Esophagus squamous epithelium (tissue), 5 donors: ENCODE measurements at regions of chr7 and their contacts with region 1.

Region 1: GRCh38 chr7:129163875-129164544 is 19.5 kb downstream of the TSPAN33 start:
- DNase-seq: no peak
- H3K4me3 ChIP-seq: no peak overlapping the region
- H3K27ac ChIP-seq: no peak overlapping the region
- H3K4me1 ChIP-seq: peaks cover 0 to 8% (median 3%) of the 10 kb centered on the region in 3 donors
- H3K27me3 ChIP-seq: peaks cover 0 to 13% (median 0%) of the 10 kb centered on the region in 4 donors
- CTCF ChIP-seq: peak; percentile 62 to 89 (median 76)
- POLR2A ChIP-seq: no peak

Region 2: DNA sequence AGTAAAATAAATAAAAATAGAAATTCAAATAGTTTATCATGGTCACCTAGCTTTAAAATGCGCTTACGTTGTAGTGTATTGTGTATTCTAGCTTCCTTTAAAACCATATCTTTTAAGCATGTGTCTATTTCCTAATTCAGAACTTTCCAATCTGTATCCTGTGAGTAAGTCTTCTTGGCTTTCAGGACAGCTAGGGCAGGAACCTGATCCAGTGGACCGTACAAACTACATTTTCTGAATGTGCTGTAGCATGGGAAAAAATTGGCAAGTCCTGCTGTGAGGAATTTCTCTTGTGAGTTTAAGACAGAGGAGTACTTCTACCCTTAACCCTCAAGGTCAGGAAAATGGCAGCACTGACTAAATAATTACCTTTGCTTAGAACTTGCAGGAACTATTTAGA is 400.5 kb before region 1 on chr7:
- intact Hi-C with region 1: no loop called
- DNase-seq: no peak
- H3K4me3 ChIP-seq: no peak overlapping the region
- H3K27ac ChIP-seq: no peak overlapping the region
- H3K4me1 ChIP-seq: no peaks in the 10 kb centered on the region
- H3K27me3 ChIP-seq: no peaks in the 10 kb centered on the region
- CTCF ChIP-seq: no peak
- POLR2A ChIP-seq: no peak

Region 3: DNA sequence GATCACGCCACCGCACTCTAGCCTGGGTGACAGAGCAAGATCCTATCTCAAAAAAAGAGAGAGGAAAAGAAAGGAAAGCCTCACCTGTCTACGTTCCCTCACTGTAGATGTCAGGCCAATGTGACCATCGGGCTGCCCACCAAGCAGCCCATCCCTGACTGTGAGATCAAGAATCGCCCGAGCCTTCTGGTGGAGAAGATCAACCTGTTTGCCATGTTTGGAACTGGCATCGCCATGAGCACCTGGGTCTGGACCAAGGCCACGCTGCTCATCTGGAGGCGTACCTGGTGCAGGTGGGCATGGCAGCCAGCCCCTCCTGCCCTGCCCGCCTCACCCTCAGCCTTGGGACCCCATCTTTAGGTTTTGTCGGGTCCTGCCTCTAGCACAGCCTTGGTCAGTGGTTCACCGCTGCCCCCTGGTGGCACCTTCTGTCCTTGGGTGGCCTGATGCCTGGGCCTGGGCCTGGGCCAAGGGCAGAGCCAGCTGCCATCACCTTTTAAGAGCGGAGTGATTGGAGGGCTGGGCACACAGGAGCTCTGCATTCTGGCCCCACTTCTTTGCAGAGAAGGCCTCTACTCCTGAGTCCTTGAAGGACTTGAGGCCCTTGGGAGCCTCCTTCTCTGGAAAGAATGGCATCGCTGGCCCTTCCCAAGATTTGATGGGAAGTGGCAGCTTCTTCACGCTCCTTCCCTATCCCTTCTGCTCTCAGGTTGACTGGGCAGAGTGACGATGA is 46.4 kb after region 1 on chr7:
- intact Hi-C with region 1: loop called (anchors 5 kb)
- DNase-seq: no peak
- H3K4me3 ChIP-seq: no peak overlapping the region
- H3K27ac ChIP-seq: no peak overlapping the region
- H3K4me1 ChIP-seq: peaks cover 0 to 7% (median 0%) of the 10 kb centered on the region in 3 donors
- H3K27me3 ChIP-seq: no peaks in the 10 kb centered on the region
- CTCF ChIP-seq: peak; percentile 78 to 93 (median 85)
- POLR2A ChIP-seq: no peak